ENCODE measurements at regions of chr20 and their contacts with region 1.

Region 1: GRCh38 chr20:18793625-18794427 is 19.8 kb upstream of the SCP2D1 start:
- DNase-seq: peak; percentile 85 to 94 (median 89)
- H3K4me3 ChIP-seq: peak overlapping the region; percentile 36 to 80
- H3K4me3 Mint-ChIP-seq: peak overlapping the region; percentile 94 to 98 (median 96)
- H3K27ac ChIP-seq: peak overlapping the region; percentile 85
- H3K27ac Mint-ChIP-seq: peak overlapping the region; percentile 92 to 100 (median 100)
- H3K4me1 ChIP-seq: peaks cover 12% of the 10 kb centered on the region
- H3K4me1 Mint-ChIP-seq: peaks cover 5 to 17% (median 11%) of the 10 kb centered on the region in 4 donors
- H3K27me3 ChIP-seq: peaks cover 5% of the 10 kb centered on the region
- H3K27me3 Mint-ChIP-seq: peaks cover 15 to 17% of the 10 kb centered on the region in 2 donors

Region 2: DNA sequence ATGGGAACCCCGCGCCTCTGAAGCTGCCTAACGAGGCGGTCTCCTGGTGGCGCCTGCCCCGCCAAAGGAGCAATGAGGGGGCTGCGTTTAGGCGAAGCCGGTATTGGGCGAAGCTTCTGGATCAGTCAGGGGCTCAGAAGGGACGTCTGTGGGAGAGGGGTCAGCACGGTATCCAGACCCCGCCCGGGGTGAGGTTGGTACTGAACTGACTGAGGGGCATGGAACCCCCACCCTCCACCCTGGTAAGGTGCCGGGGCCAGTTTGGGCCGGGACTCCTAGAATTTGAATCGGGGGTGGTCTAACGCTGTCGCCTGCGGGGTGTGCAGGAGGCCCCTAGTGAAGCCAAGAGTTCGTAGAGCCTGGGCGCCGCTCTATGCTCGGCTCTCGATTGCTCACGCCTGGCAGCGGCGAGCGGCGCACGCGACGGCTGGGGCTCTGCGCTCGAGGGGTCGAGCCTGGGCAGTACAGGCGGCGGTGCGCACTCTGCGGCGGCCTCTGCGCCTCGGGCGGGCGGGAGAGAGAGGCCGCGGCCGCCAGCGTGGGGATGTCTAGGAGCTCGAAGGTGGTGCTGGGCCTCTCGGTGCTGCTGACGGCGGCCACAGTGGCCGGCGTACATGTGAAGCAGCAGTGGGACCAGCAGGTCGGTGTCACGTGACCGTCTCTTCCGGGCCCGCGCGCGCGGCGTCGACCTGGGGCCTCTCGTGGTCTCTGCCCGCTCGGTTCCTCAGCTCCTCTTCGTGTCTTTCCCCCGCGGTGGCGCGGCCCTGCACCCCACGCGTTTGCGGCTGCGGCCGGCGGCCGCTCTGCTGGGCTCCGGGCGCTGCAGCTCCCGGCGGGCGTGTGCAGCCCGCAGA is 656.2 kb before region 1 on chr20 and contains the starts of genes KAT14 and PET117:
- CTCF ChIA-PET with region 1: no interaction called
- POLR2A ChIA-PET with region 1: interaction called, 4 read pairs
- intact Hi-C with region 1: loop called (anchors 2 kb)
- DNase-seq: peak; percentile 89 to 95 (median 92)
- H3K4me3 ChIP-seq: peak within 1 kb of the TSS; percentile 71 to 87
- H3K4me3 Mint-ChIP-seq: peak within 1 kb of the TSS; percentile 88 to 94 (median 90)
- H3K27ac ChIP-seq: peak within 1 kb of the TSS; percentile 78
- H3K27ac Mint-ChIP-seq: peak within 1 kb of the TSS; percentile 89 to 96 (median 92)
- H3K4me1 ChIP-seq: peaks cover 34% of the 10 kb centered on the region
- H3K4me1 Mint-ChIP-seq: peaks cover 22 to 43% (median 30%) of the 10 kb centered on the region in 4 donors
- H3K27me3 ChIP-seq: no peaks in the 10 kb centered on the region
- H3K27me3 Mint-ChIP-seq: no peaks in the 10 kb centered on the region
- total RNA-seq, gene KAT14: 22.4 to 24.0 TPM
- total RNA-seq, gene PET117: 14.1 to 15.0 TPM

Region 3: GRCh38 chr20:18566892-18567742 is 226.7 kb before region 1 on chr20 and contains the start of gene SMIM26:
- CTCF ChIA-PET with region 1: no interaction called
- POLR2A ChIA-PET with region 1: interaction called, 5 read pairs
- intact Hi-C with region 1: loop called (anchors 1 kb)
- DNase-seq: peak; percentile 92 to 94 (median 93)
- H3K4me3 ChIP-seq: peak within 1 kb of the TSS; percentile 77 to 78
- H3K4me3 Mint-ChIP-seq: peak within 1 kb of the TSS; percentile 94 to 99 (median 97)
- H3K27ac ChIP-seq: peak within 1 kb of the TSS; percentile 96
- H3K27ac Mint-ChIP-seq: peak within 1 kb of the TSS; percentile 93 to 100 (median 99)
- H3K4me1 ChIP-seq: peaks cover 13% of the 10 kb centered on the region
- H3K4me1 Mint-ChIP-seq: peaks cover 9 to 34% (median 14%) of the 10 kb centered on the region in 4 donors
- H3K27me3 ChIP-seq: no peaks in the 10 kb centered on the region
- H3K27me3 Mint-ChIP-seq: no peaks in the 10 kb centered on the region
- total RNA-seq, gene SMIM26: 60.2 to 64.2 TPM

Region 4: DNA sequence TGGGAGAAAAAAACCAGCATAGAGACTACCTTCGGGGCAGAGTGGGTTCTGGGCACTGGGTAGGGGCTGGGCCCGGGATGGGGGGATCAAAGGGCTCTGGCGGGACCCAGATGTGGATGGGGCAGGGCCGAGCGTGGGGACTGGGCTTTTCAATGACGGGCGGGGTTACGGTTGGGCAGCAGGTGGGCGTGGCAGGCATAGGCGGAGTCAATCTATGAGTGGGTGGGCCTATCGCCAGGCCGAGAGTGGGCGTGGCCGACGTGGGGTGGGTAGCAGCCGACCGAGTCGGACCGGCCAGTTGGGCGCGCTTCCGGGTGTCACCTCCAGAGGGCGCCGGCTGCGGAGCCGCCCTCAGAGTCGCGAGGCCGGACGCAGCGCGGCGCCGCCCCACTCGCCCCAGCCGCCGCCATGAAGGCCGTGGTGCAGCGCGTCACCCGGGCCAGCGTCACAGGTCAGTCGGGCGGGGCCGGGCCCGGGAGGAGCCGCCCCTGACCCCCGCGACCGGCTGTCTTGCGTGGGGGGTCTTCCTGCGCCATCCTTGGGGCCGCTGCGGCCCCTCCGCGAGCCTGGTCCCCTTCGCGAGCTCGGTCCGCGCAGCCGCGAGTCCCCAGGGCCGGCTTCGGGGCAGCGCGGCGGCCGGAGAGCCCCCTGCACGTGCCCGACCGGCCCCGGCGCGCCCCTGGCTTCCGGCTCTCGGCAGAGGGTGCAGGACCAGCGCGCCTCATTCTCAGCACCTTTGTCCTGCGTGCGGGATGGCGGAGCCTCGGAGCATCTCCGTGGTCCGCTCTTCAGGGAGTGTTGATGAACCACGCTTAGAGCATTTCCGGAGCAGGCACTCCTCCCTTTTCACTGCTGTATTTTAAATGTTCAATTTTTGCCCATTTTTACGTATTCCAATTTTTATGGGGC is 205.9 kb before region 1 on chr20 and contains the start of gene DTD1:
- CTCF ChIA-PET with region 1: interaction called, 3 read pairs
- POLR2A ChIA-PET with region 1: interaction called, 4 read pairs
- intact Hi-C with region 1: loop called (anchors 5 kb)
- DNase-seq: peak; percentile 66 to 77 (median 69)
- H3K4me3 ChIP-seq: peak within 1 kb of the TSS; percentile 47 to 80
- H3K4me3 Mint-ChIP-seq: peak within 1 kb of the TSS; percentile 87 to 95 (median 91)
- H3K27ac ChIP-seq: peak within 1 kb of the TSS; percentile 71
- H3K27ac Mint-ChIP-seq: peak within 1 kb of the TSS; percentile 88 to 97 (median 95)
- H3K4me1 ChIP-seq: peaks cover 27% of the 10 kb centered on the region
- H3K4me1 Mint-ChIP-seq: peaks cover 18 to 27% (median 23%) of the 10 kb centered on the region in 4 donors
- H3K27me3 ChIP-seq: no peaks in the 10 kb centered on the region
- H3K27me3 Mint-ChIP-seq: peaks cover 4 to 5% of the 10 kb centered on the region in 2 donors
- total RNA-seq, gene DTD1: 15.9 to 18.1 TPM

Region 5: GRCh38 chr20:18613556-18613955 is 180.3 kb before region 1 on chr20:
- CTCF ChIA-PET with region 1: no interaction called
- POLR2A ChIA-PET with region 1: no interaction called
- intact Hi-C with region 1: no loop called
- DNase-seq: no peak
- H3K4me3 ChIP-seq: no peak overlapping the region
- H3K4me3 Mint-ChIP-seq: no peak overlapping the region
- H3K27ac ChIP-seq: no peak overlapping the region
- H3K27ac Mint-ChIP-seq: no peak overlapping the region
- H3K4me1 ChIP-seq: no peaks in the 10 kb centered on the region
- H3K4me1 Mint-ChIP-seq: peaks cover 5 to 13% (median 9%) of the 10 kb centered on the region in 4 donors
- H3K27me3 ChIP-seq: no peaks in the 10 kb centered on the region
- H3K27me3 Mint-ChIP-seq: no peaks in the 10 kb centered on the region

Region 6: DNA sequence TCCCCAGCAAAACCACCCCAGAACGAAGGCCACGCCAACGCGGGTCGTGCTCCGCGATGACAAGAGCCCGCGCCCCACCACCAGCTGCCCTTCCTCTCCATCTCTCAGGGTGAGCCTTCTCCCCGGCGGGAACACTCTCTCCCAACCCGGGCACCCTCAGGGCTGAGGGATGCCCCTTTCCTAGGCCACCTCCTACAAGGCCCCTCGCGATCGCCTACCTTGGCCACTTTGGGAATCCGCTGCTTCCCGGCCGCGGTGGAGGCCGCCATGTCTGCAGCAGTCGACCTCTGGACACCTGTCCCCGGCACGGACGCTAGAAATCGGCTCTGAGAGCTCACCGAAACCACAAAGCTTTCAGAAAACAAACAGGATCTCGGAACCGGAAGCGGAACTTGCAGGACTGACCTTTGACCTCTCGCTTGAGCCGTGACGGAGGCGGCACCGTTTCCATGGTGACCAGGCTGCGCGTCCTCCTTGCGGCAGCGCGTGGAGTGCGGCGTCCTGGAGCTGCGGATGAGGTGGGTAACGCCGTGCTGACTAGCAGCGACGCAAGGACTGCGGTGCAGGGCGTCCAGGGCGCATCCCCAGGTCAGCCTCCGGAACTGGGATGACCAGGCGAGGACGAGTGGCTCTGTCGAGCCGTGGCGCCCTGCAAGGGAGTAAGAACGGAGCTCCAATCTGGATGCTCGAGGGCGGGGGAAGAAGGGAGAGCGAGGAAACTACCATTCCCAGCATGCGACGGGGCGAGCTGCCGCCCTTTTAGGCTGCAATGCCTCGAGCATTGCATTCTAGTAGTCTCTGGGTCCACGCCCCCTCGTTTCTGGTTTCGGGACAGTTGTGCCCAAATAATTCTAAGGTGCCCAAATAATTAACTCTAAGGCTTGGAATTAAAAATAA is 1258.5 kb after region 1 on chr20 and contains the starts of genes CFAP61 and CRNKL1:
- CTCF ChIA-PET with region 1: no interaction called
- POLR2A ChIA-PET with region 1: interaction called, 7 read pairs
- intact Hi-C with region 1: loop called (anchors 5 kb)
- DNase-seq: peak; percentile 97 to 99 (median 98)
- H3K4me3 ChIP-seq: peak within 1 kb of the TSS; percentile 85 to 98
- H3K4me3 Mint-ChIP-seq: peak within 1 kb of the TSS; percentile 93 to 100 (median 99)
- H3K27ac ChIP-seq: peak within 1 kb of the TSS; percentile 81
- H3K27ac Mint-ChIP-seq: peak within 1 kb of the TSS; percentile 92 to 100 (median 99)
- H3K4me1 ChIP-seq: peaks cover 19% of the 10 kb centered on the region
- H3K4me1 Mint-ChIP-seq: peaks cover 16 to 25% (median 21%) of the 10 kb centered on the region in 4 donors
- H3K27me3 ChIP-seq: peaks cover 7% of the 10 kb centered on the region
- H3K27me3 Mint-ChIP-seq: peaks cover 0 to 4% of the 10 kb centered on the region in 2 donors
- total RNA-seq, gene CFAP61: not detected
- total RNA-seq, gene CRNKL1: 30.0 to 32.9 TPM

Region 7: DNA sequence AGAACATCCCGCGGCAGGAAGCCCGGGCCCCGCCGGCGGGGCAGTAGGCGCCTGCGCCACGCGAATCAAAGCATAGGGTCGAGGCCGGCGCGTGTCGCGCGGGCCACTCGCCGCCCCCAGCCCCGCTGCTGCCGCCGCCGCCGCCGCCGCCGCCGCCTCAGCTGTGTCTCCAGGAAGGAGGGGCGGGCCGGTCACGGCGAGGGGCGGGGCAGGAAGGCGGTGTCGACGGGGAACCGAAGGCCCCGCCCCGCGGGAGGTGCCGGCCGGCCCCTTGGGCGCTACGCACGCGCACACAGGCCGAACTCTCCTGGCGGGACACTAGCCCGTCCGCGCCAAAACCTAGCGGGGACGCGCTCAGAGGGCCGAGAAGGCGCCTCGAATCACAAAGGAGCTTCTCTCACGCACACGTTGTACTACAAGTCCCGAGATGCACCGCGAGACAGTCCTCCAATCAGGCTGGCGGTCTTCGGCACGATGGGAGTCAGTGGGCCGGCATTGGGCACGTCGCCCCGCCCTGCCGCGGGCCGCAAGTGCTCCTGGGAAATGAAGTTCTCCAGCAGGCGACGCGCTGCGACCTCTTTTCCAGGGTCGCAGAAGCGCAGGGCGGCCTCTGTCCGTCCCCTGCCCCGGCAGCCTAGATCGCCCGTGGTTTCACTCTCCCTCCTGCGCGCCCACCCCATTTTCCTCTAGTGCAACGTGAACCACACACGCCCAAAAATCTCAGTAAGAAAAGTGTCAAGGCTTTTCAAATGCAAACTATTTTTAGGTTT is 1918.8 kb after region 1 on chr20 and contains the start of gene RALGAPA2:
- CTCF ChIA-PET with region 1: no interaction called
- POLR2A ChIA-PET with region 1: no interaction called
- intact Hi-C with region 1: loop called (anchors 5 kb)
- DNase-seq: peak; percentile 94 to 96 (median 94)
- H3K4me3 ChIP-seq: peak within 1 kb of the TSS; percentile 42 to 79
- H3K4me3 Mint-ChIP-seq: peak within 1 kb of the TSS; percentile 91 to 97 (median 96)
- H3K27ac ChIP-seq: peak within 1 kb of the TSS; percentile 79
- H3K27ac Mint-ChIP-seq: peak within 1 kb of the TSS; percentile 90 to 99 (median 96)
- H3K4me1 ChIP-seq: peaks cover 17% of the 10 kb centered on the region
- H3K4me1 Mint-ChIP-seq: peaks cover 25 to 39% (median 29%) of the 10 kb centered on the region in 4 donors
- H3K27me3 ChIP-seq: no peaks in the 10 kb centered on the region
- H3K27me3 Mint-ChIP-seq: peaks cover 0 to 3% of the 10 kb centered on the region in 2 donors
- total RNA-seq, gene RALGAPA2: 33.6 to 36.3 TPM